ENCODE measurements at regions of chr20 and their contacts with region 1.

Region 1: GRCh38 chr20:33443512-33444239 is at the start of gene SNTA1:
- DNase-seq: peak; percentile 97
- H3K4me3 Mint-ChIP-seq: peak within 1 kb of the TSS; percentile 92
- H3K27ac Mint-ChIP-seq: peak within 1 kb of the TSS; percentile 56
- H3K4me1 Mint-ChIP-seq: peaks cover 16% of the 10 kb centered on the region
- H3K27me3 Mint-ChIP-seq: no peaks in the 10 kb centered on the region
- CTCF ChIP-seq: no peak
- total RNA-seq, gene SNTA1: 5.1 and 7.6 TPM in 2 replicates

Region 2: GRCh38 chr20:33401184-33401920 is 42.3 kb before region 1 on chr20 and contains the start of gene CDK5RAP1:
- CTCF ChIA-PET with region 1: interaction called, 13 read pairs
- intact Hi-C with region 1: loop called (anchors 1 kb)
- DNase-seq: peak; percentile 91
- H3K4me3 Mint-ChIP-seq: peak within 1 kb of the TSS; percentile 99
- H3K27ac Mint-ChIP-seq: peak within 1 kb of the TSS; percentile 64
- H3K4me1 Mint-ChIP-seq: peaks cover 19% of the 10 kb centered on the region
- H3K27me3 Mint-ChIP-seq: no peaks in the 10 kb centered on the region
- CTCF ChIP-seq: no peak
- total RNA-seq, gene CDK5RAP1: 63.6 and 65.8 TPM in 2 replicates

Region 3: DNA sequence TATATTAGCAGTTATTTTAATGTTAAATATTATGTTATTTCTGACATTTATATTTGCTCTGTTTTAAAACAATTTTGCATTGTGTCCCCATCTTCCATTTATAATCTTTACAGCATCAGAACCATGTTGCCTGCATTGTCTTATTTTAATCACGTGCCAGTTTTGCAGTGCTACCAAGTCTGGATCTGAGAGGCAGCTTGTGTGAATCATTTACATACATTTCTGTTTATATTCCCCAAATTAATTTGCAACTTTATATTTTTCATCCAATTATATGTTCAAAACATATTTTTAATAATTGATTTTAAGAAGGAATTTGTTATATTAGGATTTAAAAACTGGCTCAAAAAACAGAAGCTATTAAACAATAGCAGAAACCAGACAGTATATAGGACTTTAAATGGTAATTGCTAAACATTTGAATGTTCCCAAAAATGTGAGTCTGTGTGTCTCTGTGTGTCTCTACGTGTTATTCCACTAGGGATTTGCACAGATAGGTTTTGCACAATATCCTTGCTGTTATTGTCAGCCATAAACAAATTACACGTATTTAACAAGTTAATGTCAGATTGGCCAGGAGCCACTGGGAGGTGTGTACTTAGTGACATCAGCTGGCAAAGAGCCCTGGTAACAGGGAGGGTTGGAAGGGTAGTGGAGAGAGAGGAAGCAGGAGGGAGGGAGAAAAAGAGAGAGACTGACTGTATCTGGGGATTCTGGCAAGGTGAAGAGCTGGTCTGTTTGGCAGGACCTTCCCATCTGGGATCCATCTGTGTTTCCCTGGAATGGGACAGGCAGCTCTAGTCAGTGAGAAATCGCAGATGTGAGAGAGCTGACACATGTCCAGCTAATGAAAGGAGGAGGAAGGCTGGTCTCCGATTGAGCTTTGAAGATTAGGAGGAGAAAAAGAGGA is 118.3 kb after region 1 on chr20:
- CTCF ChIA-PET with region 1: interaction called, 11 read pairs
- intact Hi-C with region 1: no loop called
- DNase-seq: peak; percentile 86
- H3K4me3 Mint-ChIP-seq: peak overlapping the region; percentile 25
- H3K27ac Mint-ChIP-seq: no peak overlapping the region
- H3K4me1 Mint-ChIP-seq: peaks cover 15% of the 10 kb centered on the region
- H3K27me3 Mint-ChIP-seq: no peaks in the 10 kb centered on the region
- CTCF ChIP-seq: no peak